ENCODE measurements at regions of chr1 and their contacts with region 1.

Region 1: GRCh38 chr1:111030590-111030989 is 66.9 kb upstream of the LRIF1 start:
- DNase-seq: peak in 8 of 9 donors; percentile 20 to 69 (median 56)
- ATAC-seq: peak; percentile 66
- H3K4me3 ChIP-seq: no peak overlapping the region
- H3K4me3 Mint-ChIP-seq: no peak overlapping the region
- H3K27ac ChIP-seq: no peak overlapping the region
- H3K27ac Mint-ChIP-seq: peak overlapping the region in 2 of 9 donors; percentile 3 to 22
- H3K4me1 ChIP-seq: no peaks in the 10 kb centered on the region
- H3K4me1 Mint-ChIP-seq: peaks cover 0 to 5% (median 0%) of the 10 kb centered on the region in 7 donors
- H3K27me3 ChIP-seq: no peaks in the 10 kb centered on the region
- H3K27me3 Mint-ChIP-seq: peaks cover 0 to 28% (median 13%) of the 10 kb centered on the region in 5 donors

Region 2: DNA sequence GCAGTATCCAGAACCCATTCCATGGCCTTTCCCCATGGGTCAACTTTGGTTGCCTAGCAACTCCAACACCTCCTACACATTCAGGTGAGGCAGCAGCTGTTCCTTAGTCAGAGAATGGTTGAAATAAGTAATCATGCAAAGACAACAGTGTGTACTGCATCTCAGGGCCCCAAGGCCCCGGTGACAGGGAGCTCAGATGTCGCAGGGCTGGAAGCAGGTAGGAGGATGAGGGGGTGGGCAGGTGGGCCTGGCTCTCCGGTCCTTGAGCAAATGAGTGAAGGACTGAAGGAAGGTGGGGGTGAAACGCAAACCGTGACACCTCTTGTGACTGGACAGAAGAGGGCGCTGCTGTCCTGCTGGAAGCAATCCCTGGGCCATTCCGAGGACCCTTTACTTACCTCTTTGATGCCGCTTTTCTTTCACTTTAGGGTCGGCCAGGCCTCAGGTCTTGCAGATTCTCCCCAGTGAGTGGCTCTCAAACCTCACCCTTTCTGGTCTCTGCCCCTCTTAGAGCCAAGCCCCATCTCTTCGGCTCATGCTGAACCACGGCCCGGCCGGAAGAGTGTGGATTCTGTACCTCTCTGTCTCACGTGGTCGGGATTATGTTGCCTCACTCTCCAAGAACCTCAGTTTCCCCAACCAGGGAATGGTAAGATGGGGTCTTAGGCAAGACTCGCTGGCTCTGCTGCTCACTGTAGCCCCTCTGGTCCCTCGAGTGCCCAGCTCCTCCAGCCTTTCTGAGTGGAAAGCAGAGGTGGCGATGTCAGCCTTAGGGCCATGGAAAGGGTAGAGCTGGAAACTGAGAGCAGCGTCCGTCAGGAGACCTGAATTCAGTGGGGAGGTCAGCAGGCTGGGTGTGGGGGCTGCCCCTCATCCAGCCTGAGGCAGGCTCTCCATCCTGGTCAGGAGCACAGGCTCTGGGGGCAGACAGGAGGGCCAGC is 506.0 kb before region 1 on chr1:
- CTCF ChIA-PET with region 1: no interaction called
- POLR2A ChIA-PET with region 1: no interaction called
- intact Hi-C with region 1: loop called in 1 of 2 experiments (anchors 1 kb)
- DNase-seq: peak in 8 of 9 donors; percentile 15 to 47 (median 35)
- ATAC-seq: peak; percentile 74
- H3K4me3 ChIP-seq: no peak overlapping the region
- H3K4me3 Mint-ChIP-seq: peak overlapping the region in 2 of 10 donors; percentile 15 to 39
- H3K27ac ChIP-seq: no peak overlapping the region
- H3K27ac Mint-ChIP-seq: no peak overlapping the region
- H3K4me1 ChIP-seq: no peaks in the 10 kb centered on the region
- H3K4me1 Mint-ChIP-seq: peaks cover 0 to 7% (median 4%) of the 10 kb centered on the region in 7 donors
- H3K27me3 ChIP-seq: no peaks in the 10 kb centered on the region
- H3K27me3 Mint-ChIP-seq: peaks cover 21 to 51% (median 25%) of the 10 kb centered on the region in 5 donors

Region 3: DNA sequence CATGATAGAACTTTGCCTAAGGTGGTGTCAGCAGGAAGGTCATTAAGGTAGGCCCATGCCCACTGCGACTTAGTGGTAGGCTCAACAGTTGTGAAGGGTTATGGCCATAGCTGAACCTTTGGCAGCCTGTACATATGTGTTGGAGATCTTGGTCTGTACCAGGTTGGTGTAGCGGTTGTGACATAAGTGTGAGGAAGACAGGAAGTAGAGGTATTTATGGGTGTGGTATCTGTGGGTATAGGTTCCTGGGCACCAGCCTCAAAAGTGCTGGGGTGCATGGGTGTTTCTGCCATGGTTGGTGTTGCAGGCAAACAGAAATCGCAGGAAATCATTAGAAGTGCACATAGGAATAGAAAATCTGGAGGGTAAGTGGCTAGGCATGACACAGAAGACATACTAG is 48.3 kb before region 1 on chr1:
- CTCF ChIA-PET with region 1: no interaction called
- POLR2A ChIA-PET with region 1: no interaction called
- intact Hi-C with region 1: no loop called
- DNase-seq: no peak
- ATAC-seq: peak; percentile 62
- H3K4me3 ChIP-seq: no peak overlapping the region
- H3K4me3 Mint-ChIP-seq: no peak overlapping the region
- H3K27ac ChIP-seq: no peak overlapping the region
- H3K27ac Mint-ChIP-seq: no peak overlapping the region
- H3K4me1 ChIP-seq: peaks cover 0 to 19% of the 10 kb centered on the region in 2 donors
- H3K4me1 Mint-ChIP-seq: peaks cover 0 to 10% (median 7%) of the 10 kb centered on the region in 7 donors
- H3K27me3 ChIP-seq: no peaks in the 10 kb centered on the region
- H3K27me3 Mint-ChIP-seq: peaks cover 14 to 42% (median 28%) of the 10 kb centered on the region in 5 donors

Region 4: DNA sequence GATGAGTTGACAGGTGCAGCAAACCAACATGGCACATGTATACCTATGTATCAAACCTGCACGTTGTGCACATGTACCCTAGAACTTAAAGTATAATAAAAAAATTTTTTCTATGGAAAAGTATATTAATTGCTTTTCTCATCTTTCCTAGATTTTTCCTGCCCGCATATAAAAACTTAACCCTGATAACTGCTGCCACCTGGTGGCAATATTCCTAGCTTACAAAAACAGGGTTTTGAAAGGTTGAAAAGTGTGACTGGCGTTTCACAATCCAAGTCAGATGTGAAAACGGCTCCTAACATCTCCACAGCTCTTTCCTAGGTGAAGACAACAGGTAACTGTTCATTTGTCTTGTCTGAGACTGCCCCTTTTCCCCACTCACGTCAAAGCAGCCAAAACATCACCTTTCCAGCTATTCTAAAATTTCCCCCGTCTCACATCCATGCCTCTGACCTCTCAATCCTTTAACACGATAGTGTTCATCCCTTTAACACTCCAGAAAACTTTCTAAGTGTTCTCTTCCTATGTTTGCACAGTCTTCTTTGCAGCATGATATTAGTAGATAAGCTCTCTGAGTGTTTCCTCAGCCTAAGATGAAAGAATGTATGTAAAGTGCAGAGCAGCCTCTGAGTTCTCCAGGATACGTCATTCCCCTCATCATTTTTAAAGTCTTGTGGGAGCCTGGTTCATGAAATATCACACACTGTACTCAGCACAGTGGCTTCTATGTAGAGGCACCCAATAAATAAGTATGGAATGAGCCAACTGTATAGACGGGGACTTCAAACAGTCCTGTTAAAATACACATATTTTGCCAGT is 369.4 kb after region 1 on chr1:
- CTCF ChIA-PET with region 1: interaction called, 19 read pairs
- POLR2A ChIA-PET with region 1: no interaction called
- intact Hi-C with region 1: loop called (anchors 1 to 5 kb)
- DNase-seq: peak in 6 of 9 donors; percentile 19 to 43 (median 32)
- ATAC-seq: no peak
- H3K4me3 ChIP-seq: no peak overlapping the region
- H3K4me3 Mint-ChIP-seq: peak overlapping the region in 1 of 10 donors; percentile 35
- H3K27ac ChIP-seq: no peak overlapping the region
- H3K27ac Mint-ChIP-seq: peak overlapping the region in 1 of 9 donors; percentile 46
- H3K4me1 ChIP-seq: no peaks in the 10 kb centered on the region
- H3K4me1 Mint-ChIP-seq: peaks cover 3 to 17% (median 13%) of the 10 kb centered on the region in 7 donors
- H3K27me3 ChIP-seq: no peaks in the 10 kb centered on the region
- H3K27me3 Mint-ChIP-seq: peaks cover 0 to 64% (median 0%) of the 10 kb centered on the region in 5 donors

Region 5: DNA sequence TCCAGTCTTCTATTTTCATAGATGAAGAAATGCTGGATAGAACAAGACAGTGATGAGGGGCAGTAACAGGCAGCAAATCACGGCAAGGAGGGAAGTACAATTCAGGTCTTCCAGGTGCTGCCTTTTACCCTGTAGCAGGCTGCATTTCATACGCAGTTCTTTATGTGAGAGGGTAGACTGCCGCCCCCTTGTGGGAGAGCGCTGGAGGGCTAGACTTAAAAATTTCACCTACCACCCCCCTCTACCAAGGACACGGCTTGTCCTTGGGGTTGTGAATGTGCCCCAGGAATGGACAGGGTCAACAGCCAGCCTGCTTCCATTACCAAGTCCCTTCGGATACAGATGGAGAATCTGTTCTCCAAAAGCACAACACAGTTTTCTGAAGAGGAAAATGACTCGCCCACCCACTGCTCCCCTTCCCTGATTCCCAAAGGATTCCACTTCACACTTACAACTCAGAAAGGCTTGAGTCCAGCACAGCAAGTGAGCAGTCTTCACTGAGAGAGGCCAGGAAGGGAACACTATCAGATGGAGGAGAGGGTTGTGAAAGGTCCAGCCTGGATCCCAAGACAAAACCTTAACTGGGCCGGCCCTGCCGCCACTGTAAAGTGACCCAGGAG is 411.1 kb after region 1 on chr1:
- CTCF ChIA-PET with region 1: no interaction called
- POLR2A ChIA-PET with region 1: no interaction called
- intact Hi-C with region 1: loop called in 1 of 2 experiments (anchors 1 kb)
- DNase-seq: peak; percentile 44 to 75 (median 67)
- ATAC-seq: peak; percentile 95
- H3K4me3 ChIP-seq: no peak overlapping the region
- H3K4me3 Mint-ChIP-seq: no peak overlapping the region
- H3K27ac ChIP-seq: peak overlapping the region; percentile 47
- H3K27ac Mint-ChIP-seq: peak overlapping the region in 8 of 9 donors; percentile 49 to 90 (median 84)
- H3K4me1 ChIP-seq: peaks cover 4 to 7% of the 10 kb centered on the region in 2 donors
- H3K4me1 Mint-ChIP-seq: peaks cover 8 to 49% (median 34%) of the 10 kb centered on the region in 7 donors
- H3K27me3 ChIP-seq: no peaks in the 10 kb centered on the region
- H3K27me3 Mint-ChIP-seq: no peaks in the 10 kb centered on the region

Measured in naive thymus-derived CD4-positive, alpha-beta T cell (primary cell).